Sigmoid colon (tissue), 7 donors: ENCODE measurements at regions of chr4 and their contacts with region 1.

Region 1: DNA sequence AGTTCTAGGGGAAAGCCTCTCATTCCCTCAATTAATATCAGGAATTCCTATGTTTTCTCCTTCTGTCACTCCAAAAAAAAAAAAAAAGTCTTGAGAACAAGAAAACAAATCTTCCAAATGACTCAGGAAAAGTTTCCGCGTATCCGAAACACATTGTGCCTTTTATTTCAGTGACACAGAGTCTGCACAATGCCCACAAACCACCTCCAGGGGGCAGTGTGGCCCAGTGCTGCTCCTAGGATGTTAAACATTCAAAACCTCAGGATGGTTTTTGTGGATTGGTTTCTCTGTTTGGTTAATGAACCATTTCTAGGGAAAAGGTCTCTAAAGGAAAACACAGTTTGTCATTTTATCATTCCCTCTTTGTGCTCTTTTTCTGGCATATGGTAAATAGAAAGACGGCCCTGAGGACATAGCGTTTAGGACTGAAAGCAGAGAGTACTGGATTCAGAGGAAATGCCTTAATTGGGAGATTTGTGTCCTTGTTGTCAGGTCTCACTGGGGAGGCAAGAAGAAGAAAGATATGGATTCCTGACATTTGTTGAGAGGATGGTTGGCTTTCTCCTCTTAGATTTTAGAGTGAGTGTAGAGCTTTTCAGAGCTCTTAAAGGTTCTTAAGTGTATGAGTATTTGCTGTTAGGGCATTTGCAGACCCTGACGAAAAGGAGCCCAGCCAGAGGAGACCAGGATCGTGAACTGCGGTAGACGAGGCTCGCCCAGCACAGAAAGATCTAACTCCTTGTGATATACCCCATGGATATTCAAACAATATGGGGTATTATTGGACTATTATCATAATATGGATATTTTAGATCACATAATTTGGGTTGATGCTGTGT is 65.7 kb upstream of the MAP9 start:
- DNase-seq: peak; percentile 92
- H3K4me3 ChIP-seq: peak overlapping the region; percentile 7 to 32 (median 17)
- H3K27ac ChIP-seq: peak overlapping the region; percentile 45 to 59 (median 46)
- H3K4me1 ChIP-seq: peaks cover 0 to 15% (median 11%) of the 10 kb centered on the region in 4 donors
- H3K27me3 ChIP-seq: no peaks in the 10 kb centered on the region
- CTCF ChIP-seq: peak; percentile 78 to 95 (median 88)
- EP300 ChIP-seq: no peak
- POLR2A ChIP-seq: no peak

Region 2: DNA sequence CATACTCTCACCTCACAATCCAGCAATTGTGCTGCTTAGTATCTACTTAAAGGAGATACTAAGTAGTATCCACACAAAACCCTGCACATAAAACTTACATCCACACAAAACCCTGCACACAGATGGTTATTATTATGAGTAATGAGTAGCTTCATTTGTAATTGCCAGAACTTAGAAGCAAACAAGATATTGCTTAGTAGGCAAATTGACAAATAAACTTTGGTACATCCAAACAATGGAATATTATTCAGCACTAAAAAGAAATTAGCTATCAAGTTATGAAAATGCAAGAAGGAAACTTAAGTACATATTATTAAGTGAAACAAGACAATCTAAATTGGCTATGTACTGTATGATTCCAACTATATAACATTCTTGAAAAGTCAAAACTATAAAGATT is 153.5 kb before region 1 on chr4:
- intact Hi-C with region 1: no loop called
- DNase-seq: no peak
- H3K4me3 ChIP-seq: no peak overlapping the region
- H3K27ac ChIP-seq: no peak overlapping the region
- H3K4me1 ChIP-seq: no peaks in the 10 kb centered on the region
- H3K27me3 ChIP-seq: no peaks in the 10 kb centered on the region
- CTCF ChIP-seq: no peak
- EP300 ChIP-seq: no peak
- POLR2A ChIP-seq: no peak

Region 3: GRCh38 chr4:155403886-155404285 is 38.6 kb before region 1 on chr4:
- intact Hi-C with region 1: no loop called
- DNase-seq: no peak
- H3K4me3 ChIP-seq: no peak overlapping the region
- H3K27ac ChIP-seq: no peak overlapping the region
- H3K4me1 ChIP-seq: peaks cover 0 to 24% (median 8%) of the 10 kb centered on the region in 4 donors
- H3K27me3 ChIP-seq: no peaks in the 10 kb centered on the region
- CTCF ChIP-seq: peak; percentile 10 to 44 (median 26)
- EP300 ChIP-seq: no peak
- POLR2A ChIP-seq: no peak

Region 4: GRCh38 chr4:155522201-155522600 is 79.7 kb after region 1 on chr4:
- intact Hi-C with region 1: loop called (anchors 5 kb)
- DNase-seq: no peak
- H3K4me3 ChIP-seq: no peak overlapping the region
- H3K27ac ChIP-seq: peak overlapping the region; percentile 25 to 81 (median 75)
- H3K4me1 ChIP-seq: peaks cover 0 to 54% (median 42%) of the 10 kb centered on the region in 4 donors
- H3K27me3 ChIP-seq: no peaks in the 10 kb centered on the region
- CTCF ChIP-seq: no peak
- EP300 ChIP-seq: no peak
- POLR2A ChIP-seq: no peak

Region 5: DNA sequence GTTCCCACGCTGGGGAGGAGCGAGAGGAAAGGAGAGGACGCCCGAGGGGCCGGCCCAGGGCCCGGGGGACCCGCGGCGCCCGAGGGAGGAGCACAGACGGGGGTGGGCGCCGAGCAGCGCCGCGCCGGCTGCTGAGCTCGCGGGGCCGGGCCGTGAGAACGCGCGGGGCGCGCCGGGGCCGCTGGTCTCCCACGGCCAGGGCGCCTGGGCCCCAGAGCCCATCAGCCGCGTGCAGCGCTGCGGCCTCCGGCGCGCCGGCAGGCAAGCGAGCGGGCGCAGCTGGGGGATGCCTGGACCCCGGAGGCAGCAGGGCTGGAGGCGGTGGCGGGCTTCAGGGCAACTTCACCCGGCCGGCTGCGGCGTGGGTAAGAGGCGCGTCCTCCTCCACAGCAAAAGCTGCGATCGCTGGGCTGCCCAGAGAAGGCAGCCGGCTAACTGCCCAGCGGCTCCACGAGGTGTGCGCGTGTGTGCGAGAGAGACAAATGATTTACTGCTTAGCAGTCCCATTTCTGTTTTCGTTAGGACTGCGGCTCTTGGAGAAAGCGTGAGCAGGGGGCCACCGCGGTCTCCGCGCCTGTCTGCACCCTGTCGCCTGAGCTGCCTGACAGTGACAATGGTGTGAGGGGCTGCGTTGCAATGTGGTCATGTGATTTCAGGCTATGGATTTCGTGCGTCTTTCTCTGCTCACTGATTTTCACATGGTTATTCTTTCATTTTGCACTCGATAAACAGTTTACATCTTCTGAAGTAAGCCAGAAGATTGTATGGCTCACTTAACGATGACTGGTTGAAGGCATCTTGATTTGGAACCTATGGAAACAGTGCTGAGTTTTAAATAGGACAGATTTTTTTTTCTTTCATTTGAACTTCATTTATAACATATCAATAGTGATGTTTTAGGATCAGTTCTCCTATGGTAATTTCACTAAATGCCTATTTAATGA is 225.4 kb after region 1 on chr4:
- intact Hi-C with region 1: loop called (anchors 1 kb)
- DNase-seq: peak; percentile 88
- H3K4me3 ChIP-seq: peak overlapping the region; percentile 75 to 82 (median 80)
- H3K27ac ChIP-seq: peak overlapping the region; percentile 90 to 97 (median 94)
- H3K4me1 ChIP-seq: peaks cover 0 to 44% (median 24%) of the 10 kb centered on the region in 4 donors
- H3K27me3 ChIP-seq: no peaks in the 10 kb centered on the region
- CTCF ChIP-seq: no peak
- EP300 ChIP-seq: no peak
- POLR2A ChIP-seq: peak in 1 of 2 donors; percentile 50

Region 6: GRCh38 chr4:155758481-155759404 is 316.3 kb after region 1 on chr4 and contains the start of gene GUCY1B1:
- intact Hi-C with region 1: loop called (anchors 2 kb)
- DNase-seq: peak; percentile 98
- H3K4me3 ChIP-seq: peak within 1 kb of the TSS; percentile 84 to 95 (median 93)
- H3K27ac ChIP-seq: peak within 1 kb of the TSS; percentile 94 to 97 (median 95)
- H3K4me1 ChIP-seq: peaks cover 0 to 42% (median 22%) of the 10 kb centered on the region in 4 donors
- H3K27me3 ChIP-seq: no peaks in the 10 kb centered on the region
- CTCF ChIP-seq: peak; percentile 27 to 46 (median 40)
- EP300 ChIP-seq: no peak
- POLR2A ChIP-seq: peak; percentile 20 to 38
- total RNA-seq, gene GUCY1B1: 45.1 to 115 (median 80.1) TPM

Region 7: GRCh38 chr4:155787113-155787710 is 344.7 kb after region 1 on chr4:
- intact Hi-C with region 1: loop called (anchors 5 kb)
- DNase-seq: no peak
- H3K4me3 ChIP-seq: no peak overlapping the region
- H3K27ac ChIP-seq: peak overlapping the region in 1 of 4 donors; percentile 2
- H3K4me1 ChIP-seq: peaks cover 0 to 31% (median 22%) of the 10 kb centered on the region in 4 donors
- H3K27me3 ChIP-seq: no peaks in the 10 kb centered on the region
- CTCF ChIP-seq: peak in 3 of 4 experiments; percentile 41 to 66 (median 50)
- EP300 ChIP-seq: no peak
- POLR2A ChIP-seq: no peak

Region 8: GRCh38 chr4:155809835-155810234 is 367.3 kb after region 1 on chr4:
- intact Hi-C with region 1: loop called (anchors 5 kb)
- DNase-seq: no peak
- H3K4me3 ChIP-seq: no peak overlapping the region
- H3K27ac ChIP-seq: peak overlapping the region in 3 of 4 donors; percentile 8 to 75 (median 69)
- H3K4me1 ChIP-seq: peaks cover 0 to 34% (median 24%) of the 10 kb centered on the region in 4 donors
- H3K27me3 ChIP-seq: no peaks in the 10 kb centered on the region
- CTCF ChIP-seq: peak; percentile 25 to 62 (median 49)
- EP300 ChIP-seq: no peak
- POLR2A ChIP-seq: no peak